PC-3 (cell line): ENCODE measurements at regions of chr3 and their contacts with region 1.

Region 1: DNA sequence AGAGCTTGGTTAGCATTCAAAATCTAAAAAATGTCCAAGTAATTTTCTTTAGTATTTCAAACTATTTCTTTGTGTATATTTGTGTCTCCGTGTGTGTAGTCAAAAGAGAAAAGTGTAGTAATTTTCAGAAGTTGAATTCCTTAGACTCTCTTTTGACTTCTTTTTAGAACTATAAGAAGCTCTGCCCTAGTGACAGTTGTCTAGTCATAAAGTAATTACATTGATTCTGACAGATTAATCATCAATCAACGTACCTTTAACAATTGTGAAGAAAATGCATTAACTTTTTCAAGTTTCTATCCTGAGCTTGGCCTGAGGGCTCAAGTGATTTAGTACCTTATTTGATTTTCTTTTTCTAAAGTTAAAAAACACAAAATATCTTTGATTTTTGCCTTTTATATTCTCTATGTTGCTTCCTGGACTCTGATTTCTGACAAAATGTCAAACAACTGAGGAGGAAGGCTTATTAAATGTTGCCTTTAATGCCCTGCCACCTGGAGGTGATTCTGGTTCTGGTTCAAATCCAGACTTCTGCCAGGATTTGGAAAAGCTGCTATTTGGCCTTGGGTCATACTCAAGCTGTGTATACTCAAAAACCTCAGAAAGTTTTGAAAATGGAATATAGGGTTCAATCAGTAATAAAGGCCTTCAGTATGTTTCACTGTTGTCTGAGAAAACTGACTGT is 653.6 kb downstream of the NSUN3 start:
- DNase-seq: peak; percentile 43
- ATAC-seq: no peak
- H3K4me3 ChIP-seq: no peak overlapping the region
- H3K27ac ChIP-seq: no peak overlapping the region
- H3K4me1 ChIP-seq: no peaks in the 10 kb centered on the region
- H3K27me3 ChIP-seq: no peaks in the 10 kb centered on the region
- CTCF ChIP-seq: peak; percentile 57

Region 2: GRCh38 chr3:94101851-94102250 is 614.6 kb before region 1 on chr3:
- CTCF ChIA-PET with region 1: no interaction called
- POLR2A ChIA-PET with region 1: no interaction called
- intact Hi-C with region 1: no loop called
- DNase-seq: peak; percentile 58
- ATAC-seq: no peak; the same call in 1 of the 2 replicates
- H3K4me3 ChIP-seq: no peak overlapping the region
- H3K27ac ChIP-seq: no peak overlapping the region
- H3K4me1 ChIP-seq: no peaks in the 10 kb centered on the region
- H3K27me3 ChIP-seq: no peaks in the 10 kb centered on the region
- CTCF ChIP-seq: peak; percentile 59

Region 3: DNA sequence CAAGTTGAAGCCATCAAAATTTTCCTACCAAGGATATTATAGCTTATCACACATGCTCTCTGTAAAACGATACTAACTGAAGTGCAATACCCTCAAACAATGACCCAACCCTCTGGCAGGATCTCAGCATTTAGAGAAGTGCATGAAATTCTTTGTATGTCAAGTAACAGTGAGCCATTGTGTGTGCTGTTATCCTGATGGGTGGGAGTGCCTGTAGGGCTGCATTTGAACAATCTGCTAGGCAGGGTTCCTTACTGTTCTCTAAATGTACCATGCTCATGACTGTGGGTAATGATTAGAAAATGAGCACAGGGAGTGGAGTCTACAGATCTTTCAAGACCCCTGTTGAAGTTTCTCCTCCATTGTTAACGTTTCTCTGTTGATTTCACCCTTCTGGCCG is 255.5 kb before region 1 on chr3:
- CTCF ChIA-PET with region 1: no interaction called
- POLR2A ChIA-PET with region 1: no interaction called
- intact Hi-C with region 1: no loop called
- DNase-seq: no peak
- ATAC-seq: no peak
- H3K4me3 ChIP-seq: no peak overlapping the region
- H3K27ac ChIP-seq: no peak overlapping the region
- H3K4me1 ChIP-seq: no peaks in the 10 kb centered on the region
- H3K27me3 ChIP-seq: no peaks in the 10 kb centered on the region
- CTCF ChIP-seq: no peak

Region 4: GRCh38 chr3:94494992-94495391 is 221.5 kb before region 1 on chr3:
- CTCF ChIA-PET with region 1: interaction called, 13 read pairs
- POLR2A ChIA-PET with region 1: no interaction called
- intact Hi-C with region 1: no loop called
- DNase-seq: no peak
- ATAC-seq: no peak
- H3K4me3 ChIP-seq: no peak overlapping the region
- H3K27ac ChIP-seq: no peak overlapping the region
- H3K4me1 ChIP-seq: no peaks in the 10 kb centered on the region
- H3K27me3 ChIP-seq: no peaks in the 10 kb centered on the region
- CTCF ChIP-seq: no peak

Region 5: DNA sequence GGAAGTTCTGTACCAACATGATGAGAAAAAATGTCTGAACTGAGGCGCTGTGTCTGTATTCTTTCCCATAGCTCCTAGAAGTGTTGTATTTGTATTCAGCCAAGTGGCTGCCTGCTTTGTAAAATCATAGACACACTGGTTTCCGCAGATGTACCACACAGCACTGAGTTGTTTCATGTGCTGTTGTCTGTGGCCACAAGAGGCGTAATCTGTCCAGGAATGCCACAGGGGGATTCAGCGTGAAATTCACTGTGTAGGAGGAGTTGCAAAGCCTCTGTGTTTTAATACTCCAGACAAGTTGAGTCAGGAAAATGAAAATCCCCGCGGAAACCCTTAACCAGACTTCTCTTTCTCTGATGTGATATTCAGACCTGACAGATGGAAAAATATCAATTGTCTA is 191.4 kb before region 1 on chr3:
- CTCF ChIA-PET with region 1: no interaction called
- POLR2A ChIA-PET with region 1: no interaction called
- intact Hi-C with region 1: loop called (anchors 2 kb)
- DNase-seq: peak; percentile 51
- ATAC-seq: peak; percentile 95
- H3K4me3 ChIP-seq: no peak overlapping the region
- H3K27ac ChIP-seq: no peak overlapping the region
- H3K4me1 ChIP-seq: no peaks in the 10 kb centered on the region
- H3K27me3 ChIP-seq: no peaks in the 10 kb centered on the region
- CTCF ChIP-seq: peak; percentile 73

Region 6: GRCh38 chr3:94735354-94735753 is 18.9 kb after region 1 on chr3:
- CTCF ChIA-PET with region 1: no interaction called
- POLR2A ChIA-PET with region 1: no interaction called
- intact Hi-C with region 1: no loop called
- DNase-seq: peak; percentile 72
- ATAC-seq: peak; percentile 88
- H3K4me3 ChIP-seq: no peak overlapping the region
- H3K27ac ChIP-seq: no peak overlapping the region
- H3K4me1 ChIP-seq: peaks cover 15% of the 10 kb centered on the region
- H3K27me3 ChIP-seq: no peaks in the 10 kb centered on the region
- CTCF ChIP-seq: no peak

Region 7: GRCh38 chr3:94935764-94936501 is 219.5 kb after region 1 on chr3:
- CTCF ChIA-PET with region 1: no interaction called
- POLR2A ChIA-PET with region 1: no interaction called
- intact Hi-C with region 1: no loop called
- DNase-seq: peak; percentile 69
- ATAC-seq: peak; percentile 88
- H3K4me3 ChIP-seq: no peak overlapping the region
- H3K27ac ChIP-seq: peak overlapping the region; percentile 57
- H3K4me1 ChIP-seq: 0 out of 2 replicates have a peak, but pooled peaks cover 6% of the 10 kb centered on the region
- H3K27me3 ChIP-seq: no peaks in the 10 kb centered on the region
- CTCF ChIP-seq: no peak